A549 (cell line): ENCODE measurements at regions of chr22 and their contacts with region 1.

Region 1: DNA sequence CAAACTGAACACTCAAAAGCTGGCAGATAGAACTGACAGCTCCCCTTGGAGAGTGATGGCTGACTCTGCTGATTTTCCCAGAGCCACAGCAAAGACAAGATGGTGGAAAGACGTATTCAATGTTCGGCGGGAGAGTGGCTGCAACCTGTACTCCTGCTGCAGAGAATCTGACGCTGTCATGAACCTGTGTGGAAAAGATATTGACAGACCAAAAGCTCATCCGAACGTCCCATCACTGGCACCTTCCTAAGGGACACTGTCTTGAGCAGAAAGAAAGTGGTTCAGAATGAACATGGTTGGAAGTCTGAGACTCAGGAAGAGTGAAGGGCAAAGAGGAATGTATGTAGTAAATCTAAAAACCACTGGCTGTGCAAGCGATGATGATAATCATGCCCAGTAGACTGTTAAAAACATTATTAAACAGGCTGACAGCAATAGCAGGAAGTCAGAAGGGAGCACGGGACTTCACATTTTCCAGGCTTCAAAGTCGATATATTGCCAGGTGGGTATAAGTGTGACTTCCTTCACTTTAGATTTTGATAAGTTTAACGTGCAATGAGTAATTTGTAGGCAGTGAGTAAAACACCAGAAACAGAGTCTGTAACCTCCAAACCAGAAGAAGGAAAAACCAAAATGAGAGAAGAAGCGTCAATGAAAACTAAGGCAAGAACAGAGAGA is 6.2 kb upstream of the IL17REL start:
- DNase-seq: no peak
- ATAC-seq: no peak
- H3K4me3 ChIP-seq: no peak overlapping the region
- H3K27ac ChIP-seq: no peak overlapping the region
- H3K4me1 ChIP-seq: no peaks in the 10 kb centered on the region
- CTCF ChIP-seq: no peak
- EP300 ChIP-seq: no peak
- POLR2A ChIP-seq: no peak
- RAD21 ChIP-seq: no peak

Region 2: DNA sequence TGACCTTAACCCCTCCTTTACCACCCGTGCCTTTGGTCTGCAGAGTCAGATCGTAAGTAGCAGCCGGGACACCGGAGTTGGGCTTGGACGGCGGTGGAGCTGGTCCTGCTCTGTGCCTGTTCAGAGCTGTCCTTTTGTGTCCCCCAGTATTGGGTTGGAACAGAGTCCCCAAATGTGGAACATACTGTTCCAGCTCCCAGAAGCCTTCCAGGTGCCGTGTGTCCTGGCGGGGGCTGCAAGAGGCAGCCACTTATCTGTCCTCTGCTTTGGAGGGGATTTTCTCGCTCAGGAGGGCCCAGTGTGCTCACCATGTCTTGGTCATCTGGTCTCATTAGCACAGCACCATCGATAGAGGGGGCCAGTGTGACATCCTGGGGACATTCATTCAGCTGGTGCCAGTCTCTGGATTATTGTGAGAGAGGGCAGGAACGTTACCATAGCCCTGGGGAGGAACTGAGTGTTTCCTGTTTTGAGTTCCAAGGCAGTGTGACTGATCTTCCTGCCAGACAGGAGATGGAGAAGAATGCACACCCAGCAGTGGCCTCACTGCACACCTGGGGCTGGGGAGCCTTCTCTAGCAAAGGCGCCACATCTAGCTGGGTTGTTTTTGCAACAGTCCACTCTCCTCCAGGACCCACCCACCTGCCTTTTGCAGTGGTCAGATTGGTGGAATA is 87.9 kb before region 1 on chr22:
- CTCF ChIA-PET with region 1: interaction called, 12 read pairs
- POLR2A ChIA-PET with region 1: no interaction called
- DNase-seq: peak in 1 of 2 experiments; percentile 77
- ATAC-seq: peak; percentile 60 to 67
- H3K4me3 ChIP-seq: no peak overlapping the region
- H3K27ac ChIP-seq: no peak overlapping the region
- H3K4me1 ChIP-seq: peaks cover 20% of the 10 kb centered on the region
- CTCF ChIP-seq: peak; percentile 37; the same call in 2 of the 3 replicates
- EP300 ChIP-seq: no peak
- POLR2A ChIP-seq: no peak
- RAD21 ChIP-seq: peak; percentile 46 to 76

Region 3: DNA sequence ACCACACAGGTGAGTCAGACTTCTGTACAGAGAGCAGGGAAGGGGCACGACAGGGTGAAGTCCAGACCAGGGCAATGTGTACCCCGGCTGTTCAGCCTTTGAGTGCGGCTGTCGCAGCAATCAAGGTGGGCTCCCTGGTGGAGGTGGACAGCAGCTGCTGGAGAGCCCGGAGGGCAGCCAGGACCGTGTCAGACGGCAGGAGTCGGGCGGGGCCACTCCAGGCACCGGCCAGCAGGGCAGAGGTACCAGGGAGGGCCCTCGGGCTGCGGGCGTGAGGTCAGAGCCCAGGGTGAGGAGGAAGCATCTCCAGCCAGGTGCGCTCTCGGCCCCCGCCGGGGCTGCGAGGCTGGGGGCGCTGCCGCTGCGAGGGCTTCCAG is 59.0 kb before region 1 on chr22:
- CTCF ChIA-PET with region 1: no interaction called
- POLR2A ChIA-PET with region 1: no interaction called
- DNase-seq: peak in 1 of 2 experiments; percentile 39
- ATAC-seq: peak; percentile 28 to 48
- H3K4me3 ChIP-seq: peak overlapping the region; percentile 79
- H3K27ac ChIP-seq: peak overlapping the region; percentile 96
- H3K4me1 ChIP-seq: peaks cover 34% of the 10 kb centered on the region
- CTCF ChIP-seq: no peak
- EP300 ChIP-seq: no peak
- POLR2A ChIP-seq: no peak
- RAD21 ChIP-seq: no peak

Region 4: GRCh38 chr22:49983148-49984042 is 35.4 kb before region 1 on chr22:
- CTCF ChIA-PET with region 1: no interaction called
- POLR2A ChIA-PET with region 1: no interaction called
- DNase-seq: no peak
- ATAC-seq: peak in 1 of 2 experiments; percentile 69; a peak in 4 of 6 replicates
- H3K4me3 ChIP-seq: peak overlapping the region; percentile 29
- H3K27ac ChIP-seq: peak overlapping the region; percentile 30 to 71; a peak in 3 of 6 replicates
- H3K4me1 ChIP-seq: no peaks in the 10 kb centered on the region
- CTCF ChIP-seq: peak; percentile 18; the same call in 2 of the 3 replicates
- EP300 ChIP-seq: no peak
- POLR2A ChIP-seq: no peak
- RAD21 ChIP-seq: no peak